CD4-positive, alpha-beta memory T cell (primary cell): ENCODE measurements at regions of chr16 and their contacts with region 1.

Region 1: DNA sequence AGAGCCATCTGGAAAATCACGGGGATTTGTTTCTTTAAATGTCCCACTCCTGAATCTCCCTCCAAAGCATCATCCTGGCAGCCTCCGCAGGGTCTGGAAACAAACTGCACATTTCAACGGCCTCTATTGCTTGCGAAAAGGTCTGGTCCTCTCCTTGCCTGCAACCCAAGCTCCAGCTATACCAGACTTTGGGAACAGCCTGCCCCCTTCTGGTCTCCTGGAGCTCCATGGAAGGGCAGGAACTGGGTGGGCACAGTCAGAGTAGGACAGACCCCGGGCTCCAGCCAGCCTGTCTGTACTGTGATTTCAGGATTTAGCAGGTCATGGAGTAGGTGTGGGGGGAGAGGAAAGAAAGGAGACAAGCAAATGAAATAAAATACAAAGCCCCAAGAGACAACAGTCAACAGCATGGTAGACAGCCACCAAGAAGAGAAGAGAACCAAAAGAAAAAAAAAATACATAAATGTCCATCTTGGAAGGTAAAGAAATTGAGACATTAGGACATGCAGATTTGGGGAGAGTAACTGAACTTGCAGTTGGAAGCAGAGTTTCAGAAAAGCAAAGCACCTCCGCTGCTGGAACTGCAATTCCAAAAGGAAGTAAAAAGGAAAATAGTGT is 2.7 kb downstream of the XYLT1 start:
- DNase-seq: peak in 4 of 5 donors; percentile 29 to 45 (median 32)
- H3K4me3 ChIP-seq: peak overlapping the region in 1 of 2 donors; percentile 68
- H3K4me3 Mint-ChIP-seq: peak overlapping the region; percentile 70 to 99 (median 94)
- H3K27ac ChIP-seq: no peak overlapping the region
- H3K27ac Mint-ChIP-seq: peak overlapping the region in 6 of 7 donors; percentile 24 to 97 (median 48)
- H3K4me1 ChIP-seq: peaks cover 39% of the 10 kb centered on the region
- H3K4me1 Mint-ChIP-seq: peaks cover 42 to 66% (median 49%) of the 10 kb centered on the region in 4 donors
- H3K27me3 ChIP-seq: no peaks in the 10 kb centered on the region
- H3K27me3 Mint-ChIP-seq: no peaks in the 10 kb centered on the region

Region 2: GRCh38 chr16:16861546-16861945 is 606.5 kb before region 1 on chr16:
- CTCF ChIA-PET with region 1: interaction called, 3 read pairs
- POLR2A ChIA-PET with region 1: no interaction called
- intact Hi-C with region 1: loop called (anchors 5 kb)
- DNase-seq: peak; percentile 41 to 50 (median 45)
- H3K4me3 ChIP-seq: no peak overlapping the region
- H3K4me3 Mint-ChIP-seq: no peak overlapping the region
- H3K27ac ChIP-seq: no peak overlapping the region
- H3K27ac Mint-ChIP-seq: no peak overlapping the region
- H3K4me1 ChIP-seq: no peaks in the 10 kb centered on the region
- H3K4me1 Mint-ChIP-seq: no peaks in the 10 kb centered on the region
- H3K27me3 ChIP-seq: no peaks in the 10 kb centered on the region
- H3K27me3 Mint-ChIP-seq: peaks cover 2 to 15% of the 10 kb centered on the region in 2 donors

Region 3: DNA sequence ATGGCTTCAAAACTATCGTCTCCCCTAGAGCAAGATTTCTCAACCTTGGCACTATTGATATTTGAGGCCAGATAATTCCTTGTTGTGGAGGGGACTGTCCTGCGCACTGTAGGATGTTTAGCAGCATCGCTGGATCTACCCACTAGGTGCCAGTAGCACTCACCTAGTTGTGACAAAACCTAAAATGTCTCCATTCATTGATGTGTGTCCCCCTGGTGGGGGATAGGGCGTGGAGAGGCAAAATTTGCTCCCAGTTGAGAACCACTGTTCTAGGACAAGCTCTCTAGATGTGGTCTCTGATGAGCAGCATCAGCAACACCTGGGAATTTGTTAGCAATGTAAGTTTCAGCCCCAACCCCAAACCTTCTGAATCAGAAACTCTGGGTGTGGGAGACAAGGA is 256.2 kb before region 1 on chr16:
- CTCF ChIA-PET with region 1: interaction called, 3 read pairs
- POLR2A ChIA-PET with region 1: no interaction called
- intact Hi-C with region 1: loop called (anchors 5 kb)
- DNase-seq: peak in 4 of 5 donors; percentile 15 to 30 (median 17)
- H3K4me3 ChIP-seq: no peak overlapping the region
- H3K4me3 Mint-ChIP-seq: no peak overlapping the region
- H3K27ac ChIP-seq: no peak overlapping the region
- H3K27ac Mint-ChIP-seq: peak overlapping the region in 1 of 7 donors; percentile 35
- H3K4me1 ChIP-seq: peaks cover 7% of the 10 kb centered on the region
- H3K4me1 Mint-ChIP-seq: peaks cover 4 to 26% (median 11%) of the 10 kb centered on the region in 4 donors
- H3K27me3 ChIP-seq: no peaks in the 10 kb centered on the region
- H3K27me3 Mint-ChIP-seq: no peaks in the 10 kb centered on the region

Region 4: DNA sequence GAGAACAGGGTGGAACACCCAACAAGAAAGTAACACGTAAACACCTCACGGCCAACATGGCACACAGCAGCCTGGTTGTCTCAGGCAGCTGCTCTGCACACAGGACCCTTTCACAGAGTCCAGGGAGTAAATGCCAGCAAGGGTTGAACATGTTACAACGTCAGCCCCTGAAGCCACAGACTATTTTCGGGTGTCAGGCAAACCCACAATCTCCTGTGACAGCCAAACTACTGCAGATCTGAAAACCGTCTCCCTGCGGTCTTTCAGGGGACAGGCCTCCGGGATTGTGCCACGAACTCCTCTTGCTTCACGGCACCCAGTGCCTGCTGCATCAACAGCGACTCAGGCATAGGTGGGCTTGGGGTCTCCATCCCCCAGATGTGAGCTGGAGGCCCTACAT is 125.0 kb before region 1 on chr16:
- CTCF ChIA-PET with region 1: interaction called, 13 read pairs
- POLR2A ChIA-PET with region 1: interaction called, 6 read pairs
- intact Hi-C with region 1: no loop called
- DNase-seq: peak; percentile 51 to 73 (median 60)
- H3K4me3 ChIP-seq: no peak overlapping the region
- H3K4me3 Mint-ChIP-seq: peak overlapping the region in 7 of 8 donors; percentile 30 to 84 (median 56)
- H3K27ac ChIP-seq: no peak overlapping the region
- H3K27ac Mint-ChIP-seq: peak overlapping the region; percentile 13 to 93 (median 91)
- H3K4me1 ChIP-seq: peaks cover 67% of the 10 kb centered on the region
- H3K4me1 Mint-ChIP-seq: peaks cover 54 to 84% (median 69%) of the 10 kb centered on the region in 4 donors
- H3K27me3 ChIP-seq: no peaks in the 10 kb centered on the region
- H3K27me3 Mint-ChIP-seq: no peaks in the 10 kb centered on the region

Region 5: DNA sequence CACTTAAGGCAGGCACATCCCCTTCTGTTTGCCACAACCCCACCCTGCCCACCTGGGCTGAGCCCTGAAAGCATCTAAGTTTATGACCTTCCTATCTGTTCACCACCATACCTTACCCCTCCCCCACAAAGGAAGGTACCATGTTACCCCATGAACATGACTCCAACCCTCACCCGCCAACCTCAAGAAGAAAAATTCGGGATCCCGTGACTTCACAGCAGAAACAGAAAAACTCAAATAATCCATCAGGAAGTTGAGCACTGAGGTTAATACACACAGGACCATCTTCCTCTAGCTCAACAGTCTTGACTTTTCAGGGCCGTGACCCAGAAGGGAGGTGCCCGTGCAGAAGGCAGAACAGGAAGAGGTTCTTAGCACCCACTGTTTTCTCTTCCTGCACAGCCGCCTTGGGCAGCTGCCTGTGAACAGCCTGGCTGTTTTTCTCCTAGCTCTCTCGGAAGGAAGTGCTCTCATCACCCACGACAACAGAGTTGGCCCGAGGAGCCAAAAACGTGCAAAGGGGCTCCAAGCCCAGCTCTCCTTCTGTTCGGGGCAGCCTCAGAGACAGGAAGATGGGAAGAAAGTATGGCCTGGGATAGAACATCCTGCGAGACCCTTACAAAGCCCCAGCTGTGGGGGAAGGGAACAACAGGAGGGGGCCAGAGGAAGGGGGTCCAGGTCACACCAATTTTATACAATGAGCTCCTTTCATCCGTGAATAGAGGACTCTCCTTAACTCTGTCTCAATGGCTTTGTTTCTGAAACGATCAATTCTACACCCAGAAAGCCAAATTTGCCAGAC is 98.4 kb before region 1 on chr16:
- CTCF ChIA-PET with region 1: interaction called, 21 read pairs
- POLR2A ChIA-PET with region 1: interaction called, 32 read pairs
- intact Hi-C with region 1: loop called (anchors 1 kb)
- DNase-seq: peak; percentile 85 to 89 (median 88)
- H3K4me3 ChIP-seq: peak overlapping the region; percentile 26 to 65
- H3K4me3 Mint-ChIP-seq: peak overlapping the region; percentile 89 to 98 (median 92)
- H3K27ac ChIP-seq: peak overlapping the region; percentile 70
- H3K27ac Mint-ChIP-seq: peak overlapping the region; percentile 95 to 100 (median 99)
- H3K4me1 ChIP-seq: peaks cover 100% of the 10 kb centered on the region
- H3K4me1 Mint-ChIP-seq: peaks cover 76 to 97% (median 88%) of the 10 kb centered on the region in 4 donors
- H3K27me3 ChIP-seq: no peaks in the 10 kb centered on the region
- H3K27me3 Mint-ChIP-seq: no peaks in the 10 kb centered on the region

Region 6: GRCh38 chr16:17448640-17449638 is 19.1 kb before region 1 on chr16:
- CTCF ChIA-PET with region 1: interaction called, 3 read pairs
- POLR2A ChIA-PET with region 1: interaction called, 17 read pairs
- intact Hi-C with region 1: no loop called
- DNase-seq: peak; percentile 48 to 70 (median 56)
- H3K4me3 ChIP-seq: peak overlapping the region in 1 of 2 donors; percentile 15
- H3K4me3 Mint-ChIP-seq: peak overlapping the region; percentile 24 to 78 (median 74)
- H3K27ac ChIP-seq: peak overlapping the region; percentile 44
- H3K27ac Mint-ChIP-seq: peak overlapping the region; percentile 89 to 96 (median 93)
- H3K4me1 ChIP-seq: peaks cover 69% of the 10 kb centered on the region
- H3K4me1 Mint-ChIP-seq: peaks cover 43 to 78% (median 56%) of the 10 kb centered on the region in 4 donors
- H3K27me3 ChIP-seq: no peaks in the 10 kb centered on the region
- H3K27me3 Mint-ChIP-seq: no peaks in the 10 kb centered on the region

Region 7: DNA sequence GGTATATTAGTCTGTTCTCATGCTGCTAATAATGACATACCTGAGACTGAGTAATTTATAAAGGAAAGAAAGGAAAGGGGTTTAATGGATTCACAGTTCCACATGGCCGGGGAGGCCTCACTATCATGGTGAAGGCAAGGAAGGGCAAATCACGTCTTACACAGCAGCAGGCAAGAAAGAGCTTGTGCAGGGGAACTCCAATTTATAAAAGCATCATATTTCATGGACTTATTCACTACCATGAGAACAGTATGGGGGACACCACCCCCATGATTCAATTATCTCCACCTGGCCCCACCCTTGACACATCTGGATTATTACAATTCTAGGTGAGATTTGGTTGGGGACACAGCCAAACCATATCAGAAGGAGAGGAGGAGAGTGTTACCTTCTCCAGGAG is 20.5 kb after region 1 on chr16:
- CTCF ChIA-PET with region 1: no interaction called
- POLR2A ChIA-PET with region 1: no interaction called
- intact Hi-C with region 1: no loop called
- DNase-seq: no peak
- H3K4me3 ChIP-seq: no peak overlapping the region
- H3K4me3 Mint-ChIP-seq: no peak overlapping the region
- H3K27ac ChIP-seq: no peak overlapping the region
- H3K27ac Mint-ChIP-seq: no peak overlapping the region
- H3K4me1 ChIP-seq: no peaks in the 10 kb centered on the region
- H3K4me1 Mint-ChIP-seq: peaks cover 0 to 4% (median 2%) of the 10 kb centered on the region in 4 donors
- H3K27me3 ChIP-seq: no peaks in the 10 kb centered on the region
- H3K27me3 Mint-ChIP-seq: peaks cover 4 to 7% of the 10 kb centered on the region in 2 donors